Activated CD4-positive, alpha-beta memory T cell treated with anti-CD3 and anti-CD28 coated beads, Interleukin-2, amount 10 ng/mL, durations not matched to agents 7 days and 5 days (primary cell): ENCODE measurements at regions of chr10 and their contacts with region 1.

Region 1: GRCh38 chr10:119834188-119834587 is 38.5 kb downstream of the MCMBP start:
- DNase-seq: no peak
- H3K4me3 Mint-ChIP-seq: no peak overlapping the region
- H3K27ac Mint-ChIP-seq: peak overlapping the region; percentile 42
- H3K4me1 Mint-ChIP-seq: peaks cover 39% of the 10 kb centered on the region
- H3K27me3 Mint-ChIP-seq: no peaks in the 10 kb centered on the region

Region 2: DNA sequence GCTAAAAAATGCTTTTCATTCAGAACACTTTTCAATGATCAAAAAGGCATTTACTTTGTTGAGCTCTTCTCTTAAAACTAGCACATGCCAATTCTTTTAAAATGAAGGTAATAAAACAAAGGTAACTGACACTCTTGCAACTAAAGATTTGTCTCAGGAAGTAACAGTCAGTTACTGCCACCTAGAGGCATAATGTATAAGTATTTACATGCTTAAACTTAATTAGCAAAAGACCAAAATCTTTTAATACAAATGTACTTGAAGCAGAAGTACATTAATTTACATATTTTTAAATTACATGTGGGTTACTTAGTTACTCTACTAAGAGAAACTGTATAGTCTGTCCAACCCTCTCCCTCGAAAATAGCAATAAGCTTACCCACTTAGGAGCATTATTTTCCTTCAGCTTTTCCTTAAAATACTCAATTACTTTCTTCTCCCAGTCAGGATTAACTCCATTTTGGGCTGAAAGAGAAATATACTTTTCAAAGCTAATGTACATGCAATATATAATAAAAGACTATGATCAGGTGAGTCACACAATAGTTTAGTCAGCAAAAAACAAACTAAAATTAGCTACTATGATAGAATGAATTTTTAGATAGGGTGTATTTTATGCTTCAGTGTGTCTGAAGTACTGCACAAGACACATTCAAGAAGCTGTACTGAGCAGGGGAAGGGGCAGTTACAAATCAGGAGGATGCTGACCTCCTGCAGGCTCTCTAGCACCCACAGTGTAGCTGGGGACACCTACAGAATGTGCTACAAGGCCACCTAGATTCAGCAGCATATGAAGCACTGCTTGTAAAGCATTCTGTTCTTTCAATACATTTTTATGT is 25.5 kb after region 1 on chr10:
- CTCF ChIA-PET with region 1: interaction called, 15 read pairs
- POLR2A ChIA-PET with region 1: no interaction called
- DNase-seq: no peak
- H3K4me3 Mint-ChIP-seq: no peak overlapping the region
- H3K27ac Mint-ChIP-seq: no peak overlapping the region
- H3K4me1 Mint-ChIP-seq: peaks cover 45% of the 10 kb centered on the region
- H3K27me3 Mint-ChIP-seq: no peaks in the 10 kb centered on the region